Endothelial cell of umbilical vein (primary cell): ENCODE measurements at regions of chr15 and their contacts with region 1.

Region 1: DNA sequence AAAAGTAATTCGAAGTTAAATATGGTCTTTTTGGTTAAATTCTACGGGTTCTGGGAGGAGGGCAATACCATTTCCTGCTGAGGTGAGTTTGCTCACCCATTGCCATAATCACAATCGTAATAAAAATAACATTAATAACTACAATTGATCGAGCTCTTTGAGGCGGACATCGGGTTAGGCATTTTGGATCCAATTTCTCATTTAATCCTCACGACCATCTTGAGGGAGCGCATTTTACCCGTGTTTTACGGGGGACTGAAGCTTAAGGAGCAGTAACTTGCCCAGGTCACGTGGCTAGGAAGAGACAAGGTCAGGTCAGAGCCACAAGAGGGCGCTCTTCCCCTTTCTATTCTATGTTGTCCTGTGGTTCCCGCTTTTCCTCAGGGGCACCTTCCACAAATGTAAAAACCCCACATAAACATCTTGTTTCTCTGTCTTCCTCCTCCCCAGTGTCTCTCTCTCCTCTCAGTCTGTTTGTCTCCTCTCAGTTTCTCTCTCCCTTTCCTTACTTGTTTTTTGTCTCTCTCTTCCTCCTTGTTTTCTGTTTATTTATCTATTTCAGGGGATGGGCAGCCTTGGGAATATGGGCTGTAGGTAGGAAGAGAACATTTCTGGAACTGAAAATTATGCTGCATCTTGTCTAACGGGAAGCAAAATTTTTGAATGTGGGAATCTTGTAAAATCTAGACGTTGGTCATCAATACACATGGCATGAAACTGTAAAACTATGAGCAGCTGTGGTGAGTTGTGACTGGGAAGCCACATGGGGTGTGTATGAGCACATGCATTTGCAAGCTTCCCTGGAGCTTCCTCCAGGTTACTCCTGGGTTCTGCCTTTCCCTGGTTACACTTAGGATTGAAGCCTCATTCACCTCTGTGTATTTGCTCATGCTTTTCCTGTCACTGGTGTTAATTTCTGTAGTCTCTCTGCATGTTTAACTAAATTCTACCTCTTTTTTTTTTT is 71.0 kb downstream of the SQOR start:
- DNase-seq: peak; percentile 90
- H3K4me3 ChIP-seq: peak overlapping the region; percentile 42 to 78 (median 51)
- H3K27ac ChIP-seq: no peak overlapping the region
- H3K4me1 ChIP-seq: peaks cover 4% of the 10 kb centered on the region
- H3K27me3 ChIP-seq: no peaks in the 10 kb centered on the region
- CTCF ChIP-seq: peak; percentile 83 to 87
- POLR2A ChIP-seq: no peak

Region 2: DNA sequence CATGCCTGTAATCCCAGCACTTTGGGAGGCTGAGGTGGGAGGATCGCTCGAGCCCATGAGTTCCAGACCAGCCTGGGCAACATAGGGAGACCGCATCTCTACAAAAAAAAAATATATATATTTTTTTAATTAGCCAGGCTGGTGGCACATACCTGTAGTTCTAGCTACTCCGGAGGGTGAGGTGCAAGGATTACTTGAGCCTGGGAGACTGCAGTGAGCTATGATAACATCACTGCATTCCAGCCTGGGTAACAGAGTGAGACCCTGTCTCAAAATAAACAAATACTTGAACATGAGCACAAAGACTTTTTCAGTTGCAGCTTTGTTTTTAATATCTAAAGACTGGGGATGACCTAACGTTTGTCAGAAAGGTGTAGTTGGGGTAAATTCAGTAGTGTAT is 296.2 kb before region 1 on chr15:
- CTCF ChIA-PET with region 1: no interaction called
- POLR2A ChIA-PET with region 1: no interaction called
- dilution Hi-C with region 1: no loop called
- intact Hi-C with region 1: no loop called
- DNase-seq: no peak
- H3K4me3 ChIP-seq: no peak overlapping the region
- H3K27ac ChIP-seq: no peak overlapping the region
- H3K4me1 ChIP-seq: peaks cover 9% of the 10 kb centered on the region
- H3K27me3 ChIP-seq: no peaks in the 10 kb centered on the region
- CTCF ChIP-seq: no peak
- POLR2A ChIP-seq: no peak

Region 3: GRCh38 chr15:45641374-45641781 is 64.4 kb before region 1 on chr15:
- CTCF ChIA-PET with region 1: interaction called, 17 read pairs
- POLR2A ChIA-PET with region 1: no interaction called
- dilution Hi-C with region 1: no loop called
- intact Hi-C with region 1: no loop called
- DNase-seq: peak; percentile 72
- H3K4me3 ChIP-seq: no peak overlapping the region
- H3K27ac ChIP-seq: peak overlapping the region; percentile 32
- H3K4me1 ChIP-seq: peaks cover 36% of the 10 kb centered on the region
- H3K27me3 ChIP-seq: no peaks in the 10 kb centered on the region
- CTCF ChIP-seq: no peak
- POLR2A ChIP-seq: no peak

Region 4: DNA sequence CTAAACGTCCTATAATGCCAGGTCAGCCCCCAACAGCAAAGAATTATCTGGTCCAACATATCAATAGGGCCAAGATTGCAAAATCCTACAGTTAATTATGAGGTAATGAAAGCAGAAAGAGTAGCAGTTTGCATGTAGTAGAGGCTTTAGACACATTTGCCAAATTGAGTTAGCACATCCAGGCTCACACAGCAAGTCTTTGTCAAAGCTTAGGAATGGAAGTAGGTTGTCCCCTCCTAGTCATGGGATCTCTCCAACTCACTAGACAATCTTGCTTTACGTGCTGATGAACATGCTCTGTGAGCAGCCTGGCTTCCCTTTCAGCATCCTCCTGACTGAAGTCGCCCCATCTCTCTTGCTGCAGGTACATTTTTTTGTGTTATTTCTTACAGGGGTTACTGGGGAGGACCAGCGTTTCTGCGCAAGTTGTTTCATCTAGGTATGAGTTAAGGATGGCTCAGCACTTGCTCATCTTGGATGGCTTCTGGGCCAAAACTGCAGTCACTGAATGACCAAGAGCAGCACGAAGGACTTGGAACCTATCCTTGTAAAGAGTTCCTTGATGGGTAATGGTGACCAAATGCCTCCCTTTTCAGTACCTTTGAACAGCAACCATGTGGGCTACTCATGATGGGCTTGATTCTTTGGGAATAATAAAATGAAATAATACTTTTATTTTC is 15.1 kb before region 1 on chr15:
- CTCF ChIA-PET with region 1: interaction called, 12 read pairs
- POLR2A ChIA-PET with region 1: no interaction called
- dilution Hi-C with region 1: no loop called
- intact Hi-C with region 1: no loop called
- DNase-seq: no peak
- H3K4me3 ChIP-seq: no peak overlapping the region
- H3K27ac ChIP-seq: no peak overlapping the region
- H3K4me1 ChIP-seq: no peaks in the 10 kb centered on the region
- H3K27me3 ChIP-seq: no peaks in the 10 kb centered on the region
- CTCF ChIP-seq: no peak
- POLR2A ChIP-seq: no peak

Region 5: GRCh38 chr15:45759936-45760335 is 54.1 kb after region 1 on chr15:
- CTCF ChIA-PET with region 1: no interaction called
- POLR2A ChIA-PET with region 1: no interaction called
- dilution Hi-C with region 1: no loop called
- intact Hi-C with region 1: no loop called
- DNase-seq: no peak
- H3K4me3 ChIP-seq: no peak overlapping the region
- H3K27ac ChIP-seq: no peak overlapping the region
- H3K4me1 ChIP-seq: no peaks in the 10 kb centered on the region
- H3K27me3 ChIP-seq: peaks cover 0 to 3% of the 10 kb centered on the region in 2 experiments
- CTCF ChIP-seq: no peak
- POLR2A ChIP-seq: no peak

Region 6: DNA sequence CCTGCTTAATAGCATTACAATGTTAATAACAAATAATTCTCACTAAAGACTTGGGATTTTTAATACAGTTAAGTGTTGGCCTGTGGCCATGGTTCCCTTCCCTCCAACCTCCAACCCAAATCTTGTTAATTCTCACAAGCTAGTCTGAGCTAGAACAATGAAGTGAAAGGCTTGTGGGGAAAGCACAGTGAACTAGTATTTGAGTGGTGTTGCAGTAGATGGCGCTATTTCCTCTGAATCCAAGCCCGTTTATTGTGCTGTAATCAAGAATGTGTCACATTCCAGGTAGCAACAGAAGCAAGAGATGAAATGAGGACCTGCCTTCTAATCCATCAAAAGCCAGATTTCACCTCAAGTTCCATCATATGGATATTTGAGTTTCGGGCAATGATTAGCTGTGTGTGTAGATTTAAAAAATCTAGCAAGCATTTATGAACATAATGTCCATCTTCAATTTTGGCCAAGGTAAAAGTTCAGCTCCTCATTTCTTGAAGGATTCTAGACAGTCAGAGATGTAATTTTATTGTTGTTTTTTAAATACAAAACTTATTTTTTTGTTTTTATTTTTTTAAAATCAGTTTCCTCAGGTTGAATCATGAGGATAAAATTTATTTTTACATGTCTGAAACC is 89.8 kb after region 1 on chr15:
- CTCF ChIA-PET with region 1: interaction called, 45 read pairs
- POLR2A ChIA-PET with region 1: no interaction called
- dilution Hi-C with region 1: no loop called
- intact Hi-C with region 1: loop called (anchors 2 kb)
- DNase-seq: peak; percentile 78
- H3K4me3 ChIP-seq: no peak overlapping the region
- H3K27ac ChIP-seq: no peak overlapping the region
- H3K4me1 ChIP-seq: no peaks in the 10 kb centered on the region
- H3K27me3 ChIP-seq: peaks cover 10 to 12% of the 10 kb centered on the region in 2 experiments
- CTCF ChIP-seq: peak; percentile 68 to 72
- POLR2A ChIP-seq: no peak

Region 7: GRCh38 chr15:45891766-45892165 is 186.0 kb after region 1 on chr15:
- CTCF ChIA-PET with region 1: no interaction called
- POLR2A ChIA-PET with region 1: no interaction called
- dilution Hi-C with region 1: no loop called
- intact Hi-C with region 1: no loop called
- DNase-seq: no peak
- H3K4me3 ChIP-seq: no peak overlapping the region
- H3K27ac ChIP-seq: no peak overlapping the region
- H3K4me1 ChIP-seq: no peaks in the 10 kb centered on the region
- H3K27me3 ChIP-seq: no peaks in the 10 kb centered on the region
- CTCF ChIP-seq: no peak
- POLR2A ChIP-seq: no peak

Region 8: GRCh38 chr15:46280762-46281542 is 575.2 kb after region 1 on chr15:
- CTCF ChIA-PET with region 1: interaction called, 12 read pairs
- POLR2A ChIA-PET with region 1: no interaction called
- dilution Hi-C with region 1: no loop called
- intact Hi-C with region 1: no loop called
- DNase-seq: peak; percentile 61
- H3K4me3 ChIP-seq: no peak overlapping the region
- H3K27ac ChIP-seq: no peak overlapping the region
- H3K4me1 ChIP-seq: no peaks in the 10 kb centered on the region
- H3K27me3 ChIP-seq: no peaks in the 10 kb centered on the region
- CTCF ChIP-seq: peak; percentile 12 to 34
- POLR2A ChIP-seq: no peak

Region 9: DNA sequence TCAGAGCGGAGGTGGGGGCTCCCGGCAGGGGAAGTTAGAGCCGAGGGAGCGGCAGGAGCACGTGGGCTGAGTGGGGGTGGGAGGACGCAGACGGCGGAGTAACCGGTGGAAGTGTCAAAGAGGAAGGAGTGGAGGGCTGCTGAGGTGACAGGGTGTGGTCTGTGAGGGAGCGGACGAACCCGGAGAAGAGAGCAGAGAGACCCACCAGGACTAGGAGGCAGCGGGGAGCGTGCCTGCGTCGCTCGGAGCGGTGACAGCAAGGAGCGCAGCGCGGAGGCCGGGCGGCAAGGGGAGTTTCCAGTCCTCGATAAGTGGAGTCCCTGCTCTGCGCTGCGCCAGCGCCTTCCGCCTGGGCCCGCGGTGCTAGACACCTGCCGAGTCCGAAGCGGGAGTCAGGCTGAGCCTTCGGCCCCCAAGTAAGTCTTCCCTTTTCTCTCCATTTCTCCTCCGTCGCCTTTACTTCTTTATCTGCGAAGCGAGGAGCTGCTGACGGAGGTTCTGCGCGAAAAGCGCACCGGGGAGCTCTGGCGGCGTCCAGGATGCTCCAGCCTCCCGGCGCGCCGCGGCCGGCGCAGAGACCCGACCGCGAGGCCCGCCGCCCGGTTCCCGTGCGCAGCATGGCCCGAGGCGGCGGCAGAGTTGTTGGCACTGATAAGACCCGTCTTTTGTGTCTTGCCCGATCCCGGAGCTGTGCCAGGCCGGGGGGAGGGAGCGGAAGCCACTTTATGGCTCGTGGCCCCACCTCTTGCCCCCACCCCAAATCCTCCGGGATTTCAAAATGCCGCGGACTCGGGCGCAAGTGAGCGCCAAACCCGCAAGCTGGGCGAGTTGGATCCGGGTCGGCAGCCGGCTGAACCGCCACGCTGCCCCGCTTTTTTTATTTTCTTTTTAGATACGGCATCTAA is 1478.5 kb after region 1 on chr15:
- CTCF ChIA-PET with region 1: interaction called, 9 read pairs
- POLR2A ChIA-PET with region 1: no interaction called
- dilution Hi-C with region 1: no loop called
- intact Hi-C with region 1: loop called (anchors 2 kb)
- DNase-seq: peak; percentile 62
- H3K4me3 ChIP-seq: peak overlapping the region; percentile 57 to 76 (median 72)
- H3K27ac ChIP-seq: peak overlapping the region; percentile 70
- H3K4me1 ChIP-seq: peaks cover 24% of the 10 kb centered on the region
- H3K27me3 ChIP-seq: no peaks in the 10 kb centered on the region
- CTCF ChIP-seq: no peak
- POLR2A ChIP-seq: no peak